Activated CD4-positive, alpha-beta T cell treated with anti-CD3 and anti-CD28 coated beads for 36 hours (primary cell): ENCODE measurements at regions of chr10 and their contacts with region 1.

Region 1: GRCh38 chr10:28241741-28242399 is 61.0 kb downstream of the MPP7 start:
- DNase-seq: peak; percentile 57
- ATAC-seq: peak; percentile 79
- H3K4me3 Mint-ChIP-seq: no peak overlapping the region
- H3K27ac Mint-ChIP-seq: no peak overlapping the region
- H3K4me1 Mint-ChIP-seq: peaks cover 30% of the 10 kb centered on the region
- H3K27me3 Mint-ChIP-seq: no peaks in the 10 kb centered on the region

Region 2: GRCh38 chr10:27446091-27446918 is 795.6 kb before region 1 on chr10:
- CTCF ChIA-PET with region 1: no interaction called
- POLR2A ChIA-PET with region 1: no interaction called
- intact Hi-C with region 1: loop called (anchors 1 to 2 kb)
- DNase-seq: no peak
- ATAC-seq: no peak
- H3K4me3 Mint-ChIP-seq: no peak overlapping the region
- H3K27ac Mint-ChIP-seq: no peak overlapping the region
- H3K4me1 Mint-ChIP-seq: peaks cover 4% of the 10 kb centered on the region
- H3K27me3 Mint-ChIP-seq: no peaks in the 10 kb centered on the region

Region 3: DNA sequence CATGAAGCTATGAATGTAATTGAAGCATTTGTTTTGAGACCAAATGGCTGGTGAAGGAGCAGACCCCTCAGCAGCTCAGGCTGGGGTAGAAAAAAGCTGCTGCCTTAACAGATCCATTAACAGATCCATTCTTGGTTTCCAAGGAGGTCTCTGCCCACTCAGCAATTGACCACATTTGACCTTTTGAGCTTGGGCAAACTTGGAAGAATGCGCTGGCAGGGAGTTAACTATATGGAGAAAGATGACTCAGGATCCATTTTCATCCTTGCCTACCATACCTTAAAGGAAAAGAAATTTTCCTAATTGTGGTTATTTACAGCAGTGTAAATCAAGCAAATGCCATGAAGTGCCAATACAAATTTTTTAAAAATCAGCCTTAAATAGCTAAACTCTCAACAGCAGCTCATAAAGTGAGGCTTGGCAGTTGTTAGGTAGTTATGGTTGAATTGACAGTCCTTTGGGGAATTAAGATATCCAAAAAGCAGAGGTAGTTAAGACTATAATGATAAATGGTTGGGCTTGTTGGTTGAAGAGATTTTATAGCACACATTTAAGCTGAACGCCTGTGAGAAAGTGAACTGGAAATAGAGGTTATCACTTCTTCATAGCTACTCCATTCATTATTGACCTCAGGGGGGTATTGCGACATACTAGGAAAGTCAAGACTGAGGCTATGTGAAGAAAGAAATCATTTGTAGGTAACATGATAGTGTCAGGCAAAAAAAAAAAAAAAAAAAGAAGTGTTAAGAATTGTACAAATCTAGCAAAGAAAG is 580.2 kb before region 1 on chr10:
- CTCF ChIA-PET with region 1: interaction called, 3 read pairs
- POLR2A ChIA-PET with region 1: no interaction called
- intact Hi-C with region 1: loop called in 1 of 2 experiments (anchors 5 kb)
- DNase-seq: no peak
- ATAC-seq: no peak
- H3K4me3 Mint-ChIP-seq: no peak overlapping the region
- H3K27ac Mint-ChIP-seq: no peak overlapping the region
- H3K4me1 Mint-ChIP-seq: no peaks in the 10 kb centered on the region
- H3K27me3 Mint-ChIP-seq: peaks cover 25% of the 10 kb centered on the region

Region 4: GRCh38 chr10:27998254-27999004 is 243.4 kb before region 1 on chr10:
- CTCF ChIA-PET with region 1: no interaction called
- POLR2A ChIA-PET with region 1: no interaction called
- intact Hi-C with region 1: loop called in 1 of 2 experiments (anchors 5 kb)
- DNase-seq: peak; percentile 53
- ATAC-seq: peak; percentile 75
- H3K4me3 Mint-ChIP-seq: peak overlapping the region; percentile 72
- H3K27ac Mint-ChIP-seq: peak overlapping the region; percentile 7
- H3K4me1 Mint-ChIP-seq: peaks cover 10% of the 10 kb centered on the region
- H3K27me3 Mint-ChIP-seq: peaks cover 34% of the 10 kb centered on the region

Region 5: GRCh38 chr10:28179006-28179742 is 62.7 kb before region 1 on chr10:
- CTCF ChIA-PET with region 1: interaction called, 12 read pairs
- POLR2A ChIA-PET with region 1: no interaction called
- intact Hi-C with region 1: loop called (anchors 1 to 5 kb)
- DNase-seq: peak; percentile 51
- ATAC-seq: peak; percentile 28
- H3K4me3 Mint-ChIP-seq: peak overlapping the region; percentile 43
- H3K27ac Mint-ChIP-seq: peak overlapping the region; percentile 97
- H3K4me1 Mint-ChIP-seq: peaks cover 36% of the 10 kb centered on the region
- H3K27me3 Mint-ChIP-seq: no peaks in the 10 kb centered on the region

Region 6: GRCh38 chr10:28302638-28303488 is 61.0 kb after region 1 on chr10 and contains the start of gene MPP7:
- CTCF ChIA-PET with region 1: interaction called, 16 read pairs
- POLR2A ChIA-PET with region 1: interaction called, 10 read pairs
- intact Hi-C with region 1: no loop called
- DNase-seq: peak; percentile 97
- ATAC-seq: peak; percentile 97
- H3K4me3 Mint-ChIP-seq: peak within 1 kb of the TSS; percentile 90
- H3K27ac Mint-ChIP-seq: peak within 1 kb of the TSS; percentile 80
- H3K4me1 Mint-ChIP-seq: peaks cover 49% of the 10 kb centered on the region
- H3K27me3 Mint-ChIP-seq: no peaks in the 10 kb centered on the region
- total RNA-seq, gene MPP7: 10.9 to 11.0 TPM